Activated B cell treated with CpG ODN at 0.5 μM for 24 hours (primary cell): ENCODE measurements at regions of chr1 and their contacts with region 1.

Region 1: DNA sequence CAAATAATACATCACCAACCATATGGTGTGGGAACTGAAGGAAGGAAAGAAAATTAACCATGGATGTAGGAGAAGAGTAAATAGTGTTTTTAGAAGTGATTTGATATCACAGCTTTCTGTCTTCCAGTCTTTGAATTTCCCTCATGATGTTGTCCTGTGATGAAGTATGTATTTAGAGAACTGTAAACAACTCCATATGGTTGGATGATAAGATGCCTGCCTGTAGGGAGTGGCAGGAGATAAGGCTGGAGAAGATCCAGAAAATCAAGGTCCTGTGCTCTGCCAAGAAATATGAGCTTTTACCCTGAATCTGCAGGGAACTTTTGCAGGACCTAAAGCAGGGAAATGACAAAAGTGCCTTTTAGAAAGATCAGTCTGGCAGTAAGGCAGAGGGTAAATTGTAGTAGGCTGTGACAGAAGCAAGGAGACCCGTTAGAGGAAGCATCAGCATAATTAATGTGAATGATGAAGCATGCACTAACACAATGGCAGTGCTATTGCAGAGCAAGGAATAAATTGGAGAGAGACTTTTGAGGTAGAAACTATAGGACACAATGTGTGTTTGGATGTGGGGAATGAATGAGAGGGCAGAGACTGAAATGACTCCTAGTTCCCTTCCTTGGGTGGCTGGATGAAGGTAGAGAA is 21.9 kb downstream of the CEPT1 start:
- DNase-seq: no peak
- ATAC-seq: no peak
- H3K4me3 Mint-ChIP-seq: no peak overlapping the region
- H3K27ac Mint-ChIP-seq: peak overlapping the region; percentile 46
- H3K4me1 Mint-ChIP-seq: peaks cover 26% of the 10 kb centered on the region
- H3K27me3 Mint-ChIP-seq: no peaks in the 10 kb centered on the region
- CTCF ChIP-seq: no peak

Region 2: DNA sequence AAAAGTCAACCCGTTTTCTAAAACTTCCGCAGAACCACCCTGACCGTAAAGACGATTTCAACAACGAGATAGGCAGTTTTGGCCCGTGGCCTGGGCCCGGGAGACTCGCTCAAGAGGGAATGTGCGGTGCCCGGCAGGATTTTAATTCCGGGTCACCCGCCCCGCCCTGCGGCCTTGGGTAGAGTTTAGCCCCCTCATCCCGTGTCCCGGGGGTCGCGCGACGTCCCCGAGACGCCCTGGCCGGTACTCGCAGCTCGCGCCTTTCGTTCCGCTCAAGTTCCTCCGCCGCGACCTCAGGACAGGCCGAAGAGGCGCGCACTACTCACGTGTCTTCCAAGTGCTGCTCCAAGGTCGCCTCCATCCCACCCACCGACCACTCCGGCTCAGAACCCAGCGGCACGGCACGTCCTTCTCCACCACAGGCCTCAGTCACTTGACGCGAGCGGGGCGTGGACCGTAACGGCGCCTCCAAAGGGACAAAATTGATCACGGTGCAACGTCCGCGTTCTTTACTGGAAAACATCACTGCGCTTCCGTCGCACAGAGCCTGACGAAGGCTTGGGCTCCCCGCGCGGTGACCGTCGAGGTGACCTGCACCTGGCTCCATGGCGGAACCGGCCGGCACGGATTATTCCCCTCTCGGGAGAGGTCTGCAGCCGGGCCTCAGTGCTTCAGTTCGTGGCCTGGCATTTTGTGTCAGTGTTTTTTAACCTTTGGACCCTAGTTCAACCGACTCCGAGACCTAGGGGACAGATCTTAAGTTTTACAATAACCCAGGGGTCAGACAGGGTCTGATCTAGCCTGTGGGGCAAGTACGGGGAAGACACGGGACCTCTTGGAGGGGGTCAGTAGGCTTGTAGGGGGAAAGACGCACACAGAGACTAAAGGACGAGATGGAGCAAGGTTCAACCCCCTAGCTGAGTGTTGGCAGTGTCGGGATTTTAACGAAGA is 754.4 kb before region 1 on chr1 and contains the start of gene LAMTOR5:
- CTCF ChIA-PET with region 1: no interaction called
- POLR2A ChIA-PET with region 1: interaction called, 10 read pairs
- intact Hi-C with region 1: no loop called
- DNase-seq: peak; percentile 84
- ATAC-seq: peak; percentile 91
- H3K4me3 Mint-ChIP-seq: peak within 1 kb of the TSS; percentile 97
- H3K27ac Mint-ChIP-seq: peak within 1 kb of the TSS; percentile 96
- H3K4me1 Mint-ChIP-seq: peaks cover 26% of the 10 kb centered on the region
- H3K27me3 Mint-ChIP-seq: no peaks in the 10 kb centered on the region
- CTCF ChIP-seq: no peak
- total RNA-seq, gene LAMTOR5: 160 and 172 TPM in 2 replicates

Region 3: DNA sequence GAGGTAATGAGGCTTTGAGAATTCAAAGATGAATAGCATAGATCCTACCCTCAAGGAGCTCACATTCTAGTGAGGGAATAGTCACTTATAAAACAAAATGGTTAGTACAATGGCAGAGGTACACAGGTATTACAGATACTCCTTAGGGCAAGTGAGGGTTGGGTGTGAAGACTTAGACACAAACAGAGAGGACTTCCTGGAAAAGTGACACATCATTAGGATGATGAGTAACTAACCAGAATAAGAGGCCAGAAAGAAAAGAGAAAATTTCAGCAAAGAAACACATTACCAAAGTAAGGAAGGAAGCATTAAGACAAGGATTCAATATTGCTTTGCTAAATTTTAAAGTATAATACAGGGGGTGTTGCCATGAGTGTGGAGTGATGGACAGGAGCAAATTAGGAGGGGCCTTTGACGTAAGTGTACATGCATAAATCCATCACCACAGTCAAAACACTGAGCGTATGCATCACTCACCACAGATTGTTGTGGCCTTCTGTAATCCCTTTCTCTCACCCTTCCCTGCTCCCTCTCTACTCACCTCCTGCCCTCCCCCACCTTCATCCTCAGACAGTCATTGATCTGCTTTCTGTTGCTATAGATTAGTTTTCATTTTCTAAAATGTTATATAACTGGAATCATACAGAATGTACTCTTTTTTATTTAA is 281.1 kb before region 1 on chr1:
- CTCF ChIA-PET with region 1: no interaction called
- POLR2A ChIA-PET with region 1: no interaction called
- intact Hi-C with region 1: no loop called
- DNase-seq: no peak
- ATAC-seq: peak; percentile 8
- H3K4me3 Mint-ChIP-seq: peak overlapping the region; percentile 73
- H3K27ac Mint-ChIP-seq: peak overlapping the region; percentile 93
- H3K4me1 Mint-ChIP-seq: peaks cover 92% of the 10 kb centered on the region
- H3K27me3 Mint-ChIP-seq: no peaks in the 10 kb centered on the region
- CTCF ChIP-seq: no peak

Region 4: GRCh38 chr1:111148376-111148881 is 13.5 kb before region 1 on chr1:
- CTCF ChIA-PET with region 1: interaction called, 3 read pairs
- POLR2A ChIA-PET with region 1: interaction called, 3 read pairs
- intact Hi-C with region 1: loop called (anchors 1 kb)
- DNase-seq: no peak
- ATAC-seq: peak; percentile 40
- H3K4me3 Mint-ChIP-seq: peak overlapping the region; percentile 52
- H3K27ac Mint-ChIP-seq: peak overlapping the region; percentile 64
- H3K4me1 Mint-ChIP-seq: peaks cover 88% of the 10 kb centered on the region
- H3K27me3 Mint-ChIP-seq: no peaks in the 10 kb centered on the region
- CTCF ChIP-seq: no peak

Region 5: DNA sequence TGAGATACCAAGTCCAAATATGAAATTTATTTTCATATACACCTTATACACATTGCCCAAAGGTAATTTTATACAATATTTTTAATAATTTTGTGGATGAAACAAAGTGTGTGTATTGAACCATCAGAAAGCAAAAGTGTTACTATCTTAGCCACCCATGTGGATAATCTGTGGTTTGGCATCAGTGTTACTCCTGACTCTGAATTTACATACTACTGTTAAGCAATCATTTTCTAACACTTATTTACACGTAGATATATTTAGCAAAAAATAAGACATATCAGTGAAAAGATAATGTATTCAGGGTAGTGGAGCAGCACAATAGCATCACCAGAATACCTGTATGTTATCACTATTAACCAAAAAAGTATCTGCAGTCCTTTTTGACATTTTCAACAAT is 14.7 kb after region 1 on chr1:
- CTCF ChIA-PET with region 1: no interaction called
- POLR2A ChIA-PET with region 1: interaction called, 3 read pairs
- intact Hi-C with region 1: loop called (anchors 2 kb)
- DNase-seq: no peak
- ATAC-seq: peak; percentile 64
- H3K4me3 Mint-ChIP-seq: no peak overlapping the region
- H3K27ac Mint-ChIP-seq: peak overlapping the region; percentile 69
- H3K4me1 Mint-ChIP-seq: peaks cover 64% of the 10 kb centered on the region
- H3K27me3 Mint-ChIP-seq: no peaks in the 10 kb centered on the region
- CTCF ChIP-seq: no peak